CD4-positive, alpha-beta T cell (primary cell): ENCODE measurements at regions of chr3 and their contacts with region 1.

Region 1: GRCh38 chr3:171522651-171523050 is 62.4 kb upstream of the TNIK start:
- DNase-seq: no peak
- ATAC-seq: no peak
- H3K4me3 ChIP-seq: no peak overlapping the region
- H3K4me3 Mint-ChIP-seq: no peak overlapping the region
- H3K27ac ChIP-seq: no peak overlapping the region
- H3K27ac Mint-ChIP-seq: no peak overlapping the region
- H3K4me1 ChIP-seq: no peaks in the 10 kb centered on the region
- H3K4me1 Mint-ChIP-seq: no peaks in the 10 kb centered on the region
- H3K27me3 ChIP-seq: no peaks in the 10 kb centered on the region
- H3K27me3 Mint-ChIP-seq: no peaks in the 10 kb centered on the region
- CTCF ChIP-seq: no peak

Region 2: DNA sequence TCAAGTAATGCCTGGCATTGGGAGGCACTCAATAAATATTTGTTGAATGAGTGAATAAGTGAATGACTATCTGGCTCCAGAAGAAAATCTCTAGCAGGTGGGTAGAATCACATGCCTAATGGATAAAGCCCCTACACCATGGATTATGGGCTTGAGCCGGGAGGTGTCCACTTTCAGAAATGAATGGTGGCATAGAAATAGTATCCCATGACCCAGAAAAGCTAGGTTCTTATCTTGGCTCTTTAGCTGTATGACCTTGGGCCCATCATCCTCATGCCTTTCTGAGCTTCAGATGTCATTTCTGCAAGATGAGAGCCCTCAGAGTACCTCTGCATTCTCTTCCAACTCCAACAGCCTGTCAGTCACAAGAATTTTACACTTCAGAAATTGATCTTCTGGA is 25.2 kb before region 1 on chr3:
- CTCF ChIA-PET with region 1: no interaction called
- POLR2A ChIA-PET with region 1: no interaction called
- intact Hi-C with region 1: loop called in 1 of 2 experiments (anchors 2 kb)
- DNase-seq: no peak
- ATAC-seq: no peak
- H3K4me3 ChIP-seq: no peak overlapping the region
- H3K4me3 Mint-ChIP-seq: no peak overlapping the region
- H3K27ac ChIP-seq: no peak overlapping the region
- H3K27ac Mint-ChIP-seq: no peak overlapping the region
- H3K4me1 ChIP-seq: peaks cover 25% of the 10 kb centered on the region
- H3K4me1 Mint-ChIP-seq: peaks cover 44% of the 10 kb centered on the region
- H3K27me3 ChIP-seq: no peaks in the 10 kb centered on the region
- H3K27me3 Mint-ChIP-seq: no peaks in the 10 kb centered on the region
- CTCF ChIP-seq: no peak

Region 3: DNA sequence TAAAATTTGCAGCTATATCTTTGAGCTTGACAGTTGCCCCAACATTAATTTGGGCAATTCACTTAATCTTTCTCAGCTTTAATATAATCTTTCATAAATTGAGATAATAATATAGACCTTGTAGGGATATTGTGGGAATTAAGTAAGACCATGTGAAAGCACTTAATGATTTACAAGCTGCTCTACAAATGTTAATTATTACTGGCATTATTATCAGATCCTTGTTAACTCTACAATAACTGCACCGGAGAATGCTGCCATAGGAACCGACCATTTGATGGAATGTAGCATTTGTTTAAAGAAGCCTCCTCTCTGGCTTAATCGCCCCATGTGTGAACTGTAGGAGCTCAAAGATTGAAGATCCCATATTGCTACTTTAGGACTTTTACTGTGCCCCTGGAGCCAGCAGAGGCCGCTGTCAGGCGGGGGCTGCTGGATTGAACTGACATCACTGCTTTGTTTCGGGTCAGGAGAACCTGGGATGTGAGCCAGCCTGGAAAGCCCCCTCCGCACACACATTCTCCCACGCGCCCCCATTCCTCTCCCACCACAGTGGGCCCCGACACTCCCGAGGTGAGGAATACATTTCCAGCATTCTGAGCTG is 91.8 kb after region 1 on chr3:
- CTCF ChIA-PET with region 1: no interaction called
- POLR2A ChIA-PET with region 1: no interaction called
- intact Hi-C with region 1: no loop called
- DNase-seq: peak in 3 of 14 experiments; percentile 4 to 35 (median 23)
- ATAC-seq: no peak
- H3K4me3 ChIP-seq: no peak overlapping the region
- H3K4me3 Mint-ChIP-seq: no peak overlapping the region
- H3K27ac ChIP-seq: no peak overlapping the region
- H3K27ac Mint-ChIP-seq: no peak overlapping the region
- H3K4me1 ChIP-seq: no peaks in the 10 kb centered on the region
- H3K4me1 Mint-ChIP-seq: no peaks in the 10 kb centered on the region
- H3K27me3 ChIP-seq: no peaks in the 10 kb centered on the region
- H3K27me3 Mint-ChIP-seq: no peaks in the 10 kb centered on the region
- CTCF ChIP-seq: no peak